ENCODE measurements at regions of chr1 and their contacts with region 1.

Region 1: DNA sequence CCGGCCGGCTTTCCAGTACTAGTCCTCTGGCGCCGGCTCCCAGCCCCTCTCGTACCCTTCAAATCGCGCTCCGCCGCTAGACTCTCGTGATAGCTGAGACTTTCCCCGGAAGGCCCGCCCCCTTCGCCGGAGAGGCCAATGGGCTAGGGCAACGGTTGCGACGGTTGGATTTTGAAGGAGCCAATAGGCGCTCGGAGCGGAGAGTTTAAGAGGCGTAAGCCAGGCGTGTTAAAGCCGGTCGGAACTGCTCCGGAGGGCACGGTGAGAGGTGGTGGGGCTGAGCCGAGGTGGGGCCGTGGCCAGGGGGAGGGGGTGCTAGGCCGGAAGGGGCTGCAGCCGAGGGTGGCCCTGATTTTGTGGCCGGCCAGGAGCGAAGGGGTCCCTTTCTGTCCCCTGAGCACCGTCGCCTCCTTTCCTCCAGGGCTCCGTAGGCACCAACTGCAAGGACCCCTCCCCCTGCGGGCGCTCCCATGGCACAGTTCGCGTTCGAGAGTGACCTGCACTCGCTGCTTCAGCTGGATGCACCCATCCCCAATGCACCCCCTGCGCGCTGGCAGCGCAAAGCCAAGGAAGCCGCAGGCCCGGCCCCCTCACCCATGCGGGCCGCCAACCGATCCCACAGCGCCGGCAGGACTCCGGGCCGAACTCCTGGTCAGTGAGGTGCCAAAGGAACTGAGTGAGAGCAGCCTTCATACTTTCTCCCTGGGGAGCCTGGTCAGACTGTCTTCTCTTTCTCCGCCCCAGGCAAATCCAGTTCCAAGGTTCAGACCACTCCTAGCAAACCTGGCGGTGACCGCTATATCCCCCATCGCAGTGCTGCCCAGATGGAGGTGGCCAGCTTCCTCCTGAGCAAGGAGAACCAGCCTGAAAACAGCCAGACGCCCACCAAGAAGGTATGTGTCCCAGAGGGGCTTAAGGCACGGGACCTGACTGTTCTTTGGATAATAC is at the start of gene CDC20:
- DNase-seq: peak; percentile 100
- H3K4me3 Mint-ChIP-seq: peak within 1 kb of the TSS; percentile 98
- H3K27ac Mint-ChIP-seq: peak within 1 kb of the TSS; percentile 92
- H3K4me1 Mint-ChIP-seq: peaks cover 42% of the 10 kb centered on the region
- H3K27me3 Mint-ChIP-seq: no peaks in the 10 kb centered on the region
- total RNA-seq, gene CDC20: 84.3 and 86.9 TPM in 2 replicates

Region 2: DNA sequence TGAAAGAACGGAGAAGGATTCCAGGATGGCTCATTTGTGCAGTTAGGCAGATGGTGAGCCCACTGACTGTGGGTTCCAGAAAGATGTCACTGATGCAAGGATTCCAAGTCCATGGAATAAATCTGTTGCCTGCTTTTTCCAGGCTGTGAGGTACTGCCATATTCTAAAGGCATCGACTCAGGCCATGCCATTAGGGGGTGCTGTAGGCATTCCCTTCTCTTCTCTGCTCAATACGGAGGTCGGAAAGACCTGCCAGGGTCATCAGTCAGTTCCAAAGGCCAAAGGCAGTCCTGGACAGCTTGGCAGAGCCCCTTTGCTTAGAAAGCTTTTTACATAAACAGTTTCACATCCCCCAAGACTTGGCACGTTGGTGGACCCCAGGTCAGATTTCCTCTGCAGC is 120.9 kb before region 1 on chr1:
- intact Hi-C with region 1: loop called (anchors 1 kb)
- DNase-seq: peak; percentile 84
- H3K4me3 Mint-ChIP-seq: no peak overlapping the region
- H3K27ac Mint-ChIP-seq: no peak overlapping the region
- H3K4me1 Mint-ChIP-seq: peaks cover 12% of the 10 kb centered on the region
- H3K27me3 Mint-ChIP-seq: no peaks in the 10 kb centered on the region

Region 3: GRCh38 chr1:43348809-43349583 is 10.0 kb before region 1 on chr1:
- intact Hi-C with region 1: loop called (anchors 1 kb)
- DNase-seq: peak; percentile 88
- H3K4me3 Mint-ChIP-seq: peak overlapping the region; percentile 65
- H3K27ac Mint-ChIP-seq: peak overlapping the region; percentile 78
- H3K4me1 Mint-ChIP-seq: peaks cover 24% of the 10 kb centered on the region
- H3K27me3 Mint-ChIP-seq: peaks cover 2% of the 10 kb centered on the region

Region 4: GRCh38 chr1:43454266-43455011 is 95.4 kb after region 1 on chr1:
- intact Hi-C with region 1: loop called (anchors 5 kb)
- DNase-seq: peak; percentile 89
- H3K4me3 Mint-ChIP-seq: peak overlapping the region; percentile 87
- H3K27ac Mint-ChIP-seq: peak overlapping the region; percentile 88
- H3K4me1 Mint-ChIP-seq: peaks cover 23% of the 10 kb centered on the region
- H3K27me3 Mint-ChIP-seq: peaks cover 33% of the 10 kb centered on the region